Dorsolateral prefrontal cortex (tissue), 120 donors: ENCODE measurements at regions of chr4 and their contacts with region 1.

Region 1: GRCh38 chr4:153488006-153488891 is 22.1 kb downstream of the TMEM131L start:
- DNase-seq: peak in 9 of 10 donors; percentile 15 to 72 (median 62)
- H3K4me3 ChIP-seq: peak overlapping the region in 52 of 59 donors; percentile 0 to 58 (median 30)
- H3K27ac ChIP-seq: peak overlapping the region in 48 of 59 donors; percentile 5 to 81 (median 60)
- H3K27me3 ChIP-seq: no peaks in the 10 kb centered on the region
- CTCF ChIP-seq: peak in 12 of 56 donors; percentile 12 to 42 (median 26)

Region 2: DNA sequence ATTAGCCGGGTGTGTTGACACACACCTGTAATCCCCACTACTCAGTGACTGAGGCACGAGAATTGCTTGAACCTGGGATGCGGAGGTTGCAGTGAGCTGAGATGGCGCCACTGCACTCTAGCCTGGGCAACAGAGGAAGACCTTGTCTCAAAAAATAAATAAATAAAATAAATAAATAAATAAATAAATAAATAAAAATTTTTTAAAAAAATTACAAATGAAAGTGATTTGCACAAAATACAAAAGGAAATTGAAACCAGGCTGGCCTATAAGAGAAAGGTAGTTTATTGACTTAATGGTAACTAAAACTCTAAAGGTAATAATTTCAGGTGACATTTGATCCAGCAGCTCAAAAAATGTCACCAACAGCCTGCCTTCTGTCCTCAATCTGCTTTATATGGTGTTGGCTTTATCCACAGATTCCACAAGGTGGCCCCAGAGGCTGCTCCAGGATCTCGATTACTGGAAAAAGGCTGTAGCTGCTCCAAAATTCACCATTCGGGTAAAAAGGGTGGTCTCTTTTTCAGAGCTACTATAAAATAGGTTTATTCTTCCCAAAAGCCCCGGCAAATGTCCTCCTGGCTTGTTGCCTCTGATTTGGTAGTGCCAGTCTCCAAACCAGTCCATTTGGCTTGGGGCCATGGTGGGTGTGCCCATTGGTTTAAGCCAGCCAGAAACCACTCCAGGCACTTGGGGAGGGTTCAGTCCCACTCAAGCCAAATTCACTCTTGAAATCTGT is 345.4 kb before region 1 on chr4:
- intact Hi-C with region 1: loop called in 1 of 2 experiments (anchors 10 kb)
- DNase-seq: peak; percentile 52 to 87 (median 72)
- H3K4me3 ChIP-seq: peak overlapping the region in 17 of 59 donors; percentile 1 to 32 (median 11)
- H3K27ac ChIP-seq: peak overlapping the region in 55 of 59 donors; percentile 2 to 100 (median 74)
- H3K27me3 ChIP-seq: no peaks in the 10 kb centered on the region
- CTCF ChIP-seq: peak; percentile 65 to 96 (median 89)

Region 3: GRCh38 chr4:153276971-153277370 is 211.3 kb before region 1 on chr4:
- intact Hi-C with region 1: no loop called
- DNase-seq: peak in 1 of 10 donors; percentile 72
- H3K4me3 ChIP-seq: peak overlapping the region in 3 of 59 donors; percentile 10 to 20 (median 13)
- H3K27ac ChIP-seq: peak overlapping the region in 49 of 59 donors; percentile 2 to 80 (median 57)
- H3K27me3 ChIP-seq: no peaks in the 10 kb centered on the region
- CTCF ChIP-seq: no peak

Region 4: DNA sequence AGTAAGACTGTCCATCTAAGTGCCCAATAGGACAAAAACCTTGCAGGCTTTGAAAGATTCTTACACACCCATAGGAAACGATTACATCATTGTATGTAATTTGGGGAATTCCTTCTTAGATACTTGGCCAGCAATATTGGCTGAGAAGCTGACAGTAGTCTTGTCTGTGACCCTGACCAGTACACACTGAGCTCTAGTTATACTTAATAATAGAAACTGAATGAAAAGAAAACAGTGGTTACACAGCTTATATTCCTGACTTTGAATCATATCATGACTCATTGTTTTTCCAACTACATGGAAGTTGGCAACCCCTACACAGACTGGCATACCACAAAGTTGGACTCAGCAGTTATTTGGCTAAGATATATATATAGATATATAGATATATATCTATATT is 188.7 kb after region 1 on chr4:
- intact Hi-C with region 1: no loop called
- DNase-seq: no peak
- H3K4me3 ChIP-seq: no peak overlapping the region
- H3K27ac ChIP-seq: no peak overlapping the region
- H3K27me3 ChIP-seq: peaks cover 0 to 1% (median 0%) of the 10 kb centered on the region in 45 donors
- CTCF ChIP-seq: no peak

Region 5: DNA sequence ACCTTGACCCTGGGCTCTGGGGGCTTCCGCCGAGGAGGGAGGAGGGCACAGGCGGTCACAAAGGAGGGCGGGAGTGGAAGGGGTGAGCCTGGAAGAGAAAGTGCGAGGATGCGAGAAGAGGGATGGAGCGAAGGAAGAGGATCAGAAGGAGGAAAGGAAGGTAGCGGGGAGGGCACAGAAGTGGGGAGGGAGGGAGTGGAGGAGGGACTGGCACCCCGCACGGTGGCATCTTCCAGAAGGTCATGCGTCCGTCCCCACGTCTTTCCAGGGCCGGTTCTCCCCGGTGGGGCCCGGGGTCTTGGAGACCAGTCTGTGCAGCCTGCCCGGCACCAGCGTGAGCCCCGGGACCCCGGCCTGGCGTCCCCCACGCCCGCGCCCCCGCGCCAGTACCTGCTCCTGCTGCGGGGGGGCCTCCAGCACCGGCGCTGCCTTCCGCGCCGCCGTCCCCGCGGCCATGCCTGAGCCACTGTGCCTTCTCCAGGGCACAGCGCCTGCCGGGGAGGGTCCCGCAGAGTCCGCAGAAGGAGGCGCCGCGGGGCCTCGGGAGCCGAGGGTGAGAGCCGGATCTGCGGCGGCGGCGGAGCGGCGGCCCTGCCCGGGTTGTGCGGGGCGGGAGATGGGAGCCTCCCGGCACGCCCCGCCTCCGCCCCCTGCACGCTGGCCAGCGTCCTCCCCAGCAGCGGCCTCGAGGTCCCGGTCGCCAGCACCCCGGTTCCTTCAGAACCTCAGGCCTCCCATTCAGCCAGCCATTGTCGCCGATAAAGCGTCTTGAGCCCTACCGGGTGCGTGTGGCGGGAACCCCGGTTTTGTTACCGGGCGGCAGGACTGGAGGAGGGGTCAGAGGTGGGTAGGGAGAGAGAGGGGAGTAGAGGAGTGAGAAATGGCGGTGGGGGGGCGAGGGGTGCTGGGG is 271.4 kb after region 1 on chr4 and contains the start of gene RNF175:
- intact Hi-C with region 1: no loop called
- DNase-seq: peak in 6 of 10 donors; percentile 16 to 60 (median 49)
- H3K4me3 ChIP-seq: peak within 1 kb of the TSS; percentile 50 to 83 (median 69)
- H3K27ac ChIP-seq: peak within 1 kb of the TSS in 52 of 59 donors; percentile 18 to 93 (median 79)
- H3K27me3 ChIP-seq: no peaks in the 10 kb centered on the region
- CTCF ChIP-seq: no peak
- total RNA-seq, gene RNF175: 8.7 to 46.5 (median 29.8) TPM

Region 6: DNA sequence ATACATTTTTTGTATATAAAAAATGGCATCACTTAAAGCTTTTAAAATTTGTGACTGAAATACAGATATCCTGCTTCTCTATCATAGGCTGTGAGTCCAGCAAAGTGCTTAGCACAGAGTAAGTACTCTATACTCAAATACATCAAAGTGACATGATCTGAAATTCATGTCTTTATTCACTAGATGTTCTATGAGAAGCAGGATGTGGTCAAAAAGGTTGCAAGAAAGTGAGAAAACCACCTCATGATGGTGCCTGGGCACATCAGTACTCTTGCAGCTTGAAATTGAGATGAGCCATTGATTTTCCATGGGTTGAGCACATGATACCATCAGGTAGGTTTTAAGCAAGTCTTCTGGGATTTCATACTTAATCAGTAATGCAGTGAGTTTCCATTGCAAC is 321.1 kb after region 1 on chr4:
- intact Hi-C with region 1: no loop called
- DNase-seq: no peak
- H3K4me3 ChIP-seq: no peak overlapping the region
- H3K27ac ChIP-seq: no peak overlapping the region
- H3K27me3 ChIP-seq: peaks cover 0 to 4% (median 0%) of the 10 kb centered on the region in 45 donors
- CTCF ChIP-seq: no peak